ENCODE measurements at regions of chr10 and their contacts with region 1.

Region 1: DNA sequence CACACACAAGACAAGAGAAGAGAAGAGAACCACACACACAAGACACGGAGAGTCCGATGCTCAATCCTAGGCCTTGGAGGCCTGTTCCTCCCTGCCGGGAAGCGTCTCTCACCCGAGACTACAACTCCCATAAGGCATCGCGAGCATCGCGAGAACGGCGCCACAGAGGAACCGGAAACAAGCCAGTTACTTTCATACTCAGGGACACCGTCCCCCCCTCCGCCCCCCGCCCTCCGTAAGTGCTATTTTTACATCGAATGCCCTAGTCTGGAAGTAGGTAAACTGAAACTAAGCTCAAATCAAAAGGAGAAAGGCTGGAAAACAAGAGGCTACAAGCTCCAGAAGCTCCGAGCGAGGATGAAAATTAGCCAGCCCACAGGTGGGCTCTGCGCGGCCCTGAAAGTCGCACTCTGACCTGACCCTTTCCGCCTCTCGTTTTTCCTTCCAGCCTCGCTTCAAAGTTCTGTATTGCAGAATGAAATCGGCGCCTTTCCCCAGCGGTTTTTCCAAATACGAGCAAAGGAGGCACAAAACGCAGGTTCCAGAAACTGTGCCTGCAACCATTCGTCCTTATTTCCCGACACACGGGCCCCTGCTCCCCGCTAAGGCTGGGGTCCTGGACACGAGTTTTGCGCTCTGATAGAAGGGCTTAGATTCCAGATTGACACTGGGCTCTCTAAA is 11.5 kb upstream of the DNAJC12 start:
- DNase-seq: peak; percentile 97
- H3K4me3 ChIP-seq: peak overlapping the region; percentile 51 to 96 (median 76)
- H3K27ac ChIP-seq: peak overlapping the region; percentile 88 to 99 (median 97)
- H3K4me1 ChIP-seq: peaks cover 0 to 6% (median 6%) of the 10 kb centered on the region in 4 donors
- H3K27me3 ChIP-seq: no peaks in the 10 kb centered on the region
- CTCF ChIP-seq: no peak
- EP300 ChIP-seq: no peak
- POLR2A ChIP-seq: peak; percentile 74

Region 2: DNA sequence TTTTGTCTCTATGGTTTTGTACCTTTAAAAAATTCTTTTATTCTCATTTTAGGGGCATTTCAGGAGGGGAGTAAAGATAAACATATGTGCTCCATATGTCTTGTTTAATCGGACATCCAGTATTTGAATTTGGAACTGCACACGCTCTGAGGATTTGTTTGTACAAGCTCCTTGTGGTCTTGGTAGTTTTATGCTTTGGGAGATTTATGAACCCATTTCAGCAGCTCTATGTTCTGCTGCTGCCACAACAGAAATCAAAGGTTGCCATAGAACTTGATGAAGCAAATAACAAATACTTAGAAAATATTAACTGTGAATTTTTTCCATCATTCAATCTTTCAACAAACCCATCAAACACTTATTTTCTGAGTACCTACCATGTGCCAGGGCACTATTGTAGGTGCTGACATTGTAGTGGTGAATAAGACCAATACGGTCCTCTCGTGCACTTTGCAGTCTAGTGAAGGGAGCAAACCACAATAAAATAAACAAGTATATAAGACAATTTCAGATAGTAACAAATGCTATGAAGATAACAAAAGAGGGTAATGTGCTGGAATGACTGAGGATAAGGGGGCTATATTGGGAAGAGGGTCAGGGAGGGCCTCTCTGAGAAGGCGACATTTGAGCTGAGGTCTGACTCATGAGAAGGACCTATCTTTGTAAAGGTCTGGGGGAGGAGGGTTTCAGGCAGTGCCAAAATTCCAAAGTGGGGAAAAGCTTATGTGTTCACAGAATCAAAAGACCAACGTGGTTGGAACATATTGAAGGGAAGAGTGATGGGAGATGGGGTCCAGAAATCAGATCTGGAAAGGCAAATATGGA is 290.2 kb after region 1 on chr10:
- in situ Hi-C with region 1: loop called in 1 of 4 experiments (anchors 10 kb)
- intact Hi-C with region 1: no loop called
- DNase-seq: no peak
- H3K4me3 ChIP-seq: no peak overlapping the region
- H3K27ac ChIP-seq: no peak overlapping the region
- H3K4me1 ChIP-seq: peaks cover 0 to 18% (median 9%) of the 10 kb centered on the region in 4 donors
- H3K27me3 ChIP-seq: no peaks in the 10 kb centered on the region
- CTCF ChIP-seq: no peak
- EP300 ChIP-seq: no peak
- POLR2A ChIP-seq: no peak

Region 3: DNA sequence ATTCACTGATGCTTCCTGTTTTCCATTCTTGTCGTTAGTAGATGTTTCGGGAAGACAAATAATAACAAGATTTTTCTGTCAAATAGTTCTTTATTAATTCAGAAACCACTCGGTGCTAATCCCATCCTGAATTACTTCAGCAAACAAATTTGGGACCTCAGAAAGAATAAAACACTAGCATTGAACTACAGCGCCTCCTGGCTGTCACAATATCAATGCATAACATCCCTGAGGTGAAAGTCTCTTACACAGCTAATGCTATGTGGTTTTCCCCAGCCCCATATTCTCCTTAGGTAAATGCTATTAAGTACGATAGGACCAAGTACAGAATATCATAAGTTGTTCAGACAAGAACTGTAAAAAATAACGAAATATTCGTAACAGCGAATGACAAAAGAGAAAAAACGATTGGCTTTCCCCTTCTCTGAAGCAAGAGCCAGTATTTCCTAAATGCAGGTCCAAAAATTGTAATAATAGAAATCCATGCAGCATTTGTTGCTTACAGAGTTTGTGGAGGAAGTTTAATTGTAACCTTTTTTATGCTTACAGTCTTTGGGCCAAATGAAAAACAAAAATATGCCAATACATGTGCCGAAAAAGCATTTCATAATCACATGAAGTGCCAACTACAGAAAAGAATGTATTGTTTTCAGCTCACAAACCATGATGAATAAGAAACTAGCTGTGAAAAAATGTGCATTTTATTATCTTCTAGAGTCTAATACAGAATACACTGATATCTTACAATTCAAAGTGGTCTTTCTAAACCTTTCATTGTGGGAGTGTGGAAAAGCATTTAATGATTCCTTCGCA is 307.1 kb after region 1 on chr10:
- in situ Hi-C with region 1: loop called in 3 of 4 experiments (anchors 10 to 25 kb)
- intact Hi-C with region 1: loop called (anchors 10 kb)
- DNase-seq: peak; percentile 72
- H3K4me3 ChIP-seq: no peak overlapping the region
- H3K27ac ChIP-seq: no peak overlapping the region
- H3K4me1 ChIP-seq: peaks cover 0 to 13% (median 12%) of the 10 kb centered on the region in 4 donors
- H3K27me3 ChIP-seq: no peaks in the 10 kb centered on the region
- CTCF ChIP-seq: peak; percentile 79 to 84 (median 82)
- EP300 ChIP-seq: no peak
- POLR2A ChIP-seq: no peak

Region 4: GRCh38 chr10:68301790-68302502 is 452.5 kb after region 1 on chr10:
- in situ Hi-C with region 1: loop called in 3 of 4 experiments (anchors 25 kb)
- intact Hi-C with region 1: no loop called
- DNase-seq: no peak
- H3K4me3 ChIP-seq: no peak overlapping the region
- H3K27ac ChIP-seq: peak overlapping the region in 2 of 4 donors; percentile 3 to 44
- H3K4me1 ChIP-seq: peaks cover 0 to 41% (median 11%) of the 10 kb centered on the region in 4 donors
- H3K27me3 ChIP-seq: no peaks in the 10 kb centered on the region
- CTCF ChIP-seq: peak; percentile 44 to 69 (median 51)
- EP300 ChIP-seq: no peak
- POLR2A ChIP-seq: no peak

Region 5: DNA sequence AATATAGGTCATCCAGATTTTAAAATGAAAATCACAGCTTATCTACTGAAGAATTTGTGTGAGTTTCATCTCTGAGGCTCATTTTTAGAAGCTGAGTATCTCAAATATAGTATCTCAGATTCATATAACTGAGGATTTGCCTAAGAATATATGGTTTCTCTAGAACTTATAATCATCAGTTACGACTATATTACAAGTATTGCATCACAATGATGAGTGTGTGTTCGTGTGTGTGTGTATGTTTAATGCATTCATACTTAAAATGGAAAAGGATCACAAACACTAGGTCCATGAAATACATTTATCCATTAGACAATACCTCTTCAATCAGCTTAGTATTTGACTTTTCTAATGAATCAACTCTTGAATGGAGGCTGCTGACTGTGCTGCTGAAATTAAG is 536.3 kb after region 1 on chr10:
- in situ Hi-C with region 1: no loop called
- intact Hi-C with region 1: no loop called
- DNase-seq: no peak
- H3K4me3 ChIP-seq: no peak overlapping the region
- H3K27ac ChIP-seq: no peak overlapping the region
- H3K4me1 ChIP-seq: no peaks in the 10 kb centered on the region
- H3K27me3 ChIP-seq: no peaks in the 10 kb centered on the region
- CTCF ChIP-seq: no peak
- EP300 ChIP-seq: no peak
- POLR2A ChIP-seq: no peak

Measured in transverse colon (tissue), 4 donors.